ENCODE measurements at regions of chr15 and their contacts with region 1.

Region 1: GRCh38 chr15:38853608-38854007 is 289.0 kb upstream of the RASGRP1 start:
- DNase-seq: peak; percentile 63
- H3K4me3 Mint-ChIP-seq: no peak overlapping the region
- H3K27ac Mint-ChIP-seq: no peak overlapping the region
- H3K4me1 Mint-ChIP-seq: no peaks in the 10 kb centered on the region
- H3K27me3 Mint-ChIP-seq: peaks cover 22% of the 10 kb centered on the region

Region 2: DNA sequence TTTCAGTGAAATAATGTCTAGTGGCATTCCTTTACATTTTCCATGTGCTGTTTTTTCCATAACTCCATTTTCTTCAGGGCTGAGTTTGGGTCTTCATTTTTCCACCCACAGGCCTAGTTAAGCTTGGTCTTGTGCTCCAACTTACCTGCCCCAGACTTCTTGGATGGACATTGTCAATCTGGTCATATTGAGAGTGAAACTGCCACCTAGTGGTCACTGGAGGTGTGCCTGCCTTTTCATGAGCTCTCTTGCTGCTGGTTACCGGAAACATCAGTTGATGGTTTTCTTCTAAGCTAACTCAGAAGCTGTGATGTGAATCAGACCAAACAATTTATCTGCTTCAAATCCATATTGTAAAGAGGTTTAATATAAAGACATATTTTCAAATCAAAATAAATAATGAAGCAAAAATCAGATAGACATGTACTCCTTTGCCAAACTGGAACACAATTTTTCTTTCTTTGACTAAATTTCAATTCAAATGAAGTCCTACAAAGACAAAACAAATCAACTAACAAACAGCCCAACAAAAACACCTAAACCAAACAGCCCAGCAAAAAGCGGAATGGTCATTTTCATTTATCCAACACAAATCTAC is 153.9 kb before region 1 on chr15:
- intact Hi-C with region 1: loop called (anchors 10 kb)
- DNase-seq: peak; percentile 92
- H3K4me3 Mint-ChIP-seq: no peak overlapping the region
- H3K27ac Mint-ChIP-seq: peak overlapping the region; percentile 65
- H3K4me1 Mint-ChIP-seq: peaks cover 57% of the 10 kb centered on the region
- H3K27me3 Mint-ChIP-seq: no peaks in the 10 kb centered on the region

Region 3: GRCh38 chr15:38894243-38894948 is 40.8 kb after region 1 on chr15:
- intact Hi-C with region 1: no loop called
- DNase-seq: no peak
- H3K4me3 Mint-ChIP-seq: no peak overlapping the region
- H3K27ac Mint-ChIP-seq: no peak overlapping the region
- H3K4me1 Mint-ChIP-seq: no peaks in the 10 kb centered on the region
- H3K27me3 Mint-ChIP-seq: peaks cover 4% of the 10 kb centered on the region